Heart right ventricle (tissue), 16 donors: ENCODE measurements at regions of chr15 and their contacts with region 1.

Region 1: GRCh38 chr15:92808978-92809879 is 90.9 kb upstream of the CHD2 start:
- DNase-seq: peak; percentile 98 to 100
- ATAC-seq: peak; percentile 90 to 96 (median 92)
- H3K4me3 ChIP-seq: peak overlapping the region; percentile 36 to 73 (median 61)
- H3K27ac ChIP-seq: peak overlapping the region; percentile 96 to 99 (median 97)
- H3K4me1 ChIP-seq: peaks cover 0 to 66% (median 28%) of the 10 kb centered on the region in 9 donors
- H3K27me3 ChIP-seq: no peaks in the 10 kb centered on the region
- CTCF ChIP-seq: peak; percentile 93 to 100 (median 99)

Region 2: GRCh38 chr15:92820236-92821021 is 11.2 kb after region 1 on chr15:
- intact Hi-C with region 1: loop called in 2 of 10 experiments (anchors 1 kb)
- DNase-seq: peak; percentile 93
- ATAC-seq: peak; percentile 95 to 99 (median 98)
- H3K4me3 ChIP-seq: peak overlapping the region in 9 of 10 donors; percentile 25 to 57 (median 52)
- H3K27ac ChIP-seq: peak overlapping the region; percentile 43 to 91 (median 86)
- H3K4me1 ChIP-seq: peaks cover 0 to 32% (median 13%) of the 10 kb centered on the region in 9 donors
- H3K27me3 ChIP-seq: no peaks in the 10 kb centered on the region
- CTCF ChIP-seq: no peak

Region 3: DNA sequence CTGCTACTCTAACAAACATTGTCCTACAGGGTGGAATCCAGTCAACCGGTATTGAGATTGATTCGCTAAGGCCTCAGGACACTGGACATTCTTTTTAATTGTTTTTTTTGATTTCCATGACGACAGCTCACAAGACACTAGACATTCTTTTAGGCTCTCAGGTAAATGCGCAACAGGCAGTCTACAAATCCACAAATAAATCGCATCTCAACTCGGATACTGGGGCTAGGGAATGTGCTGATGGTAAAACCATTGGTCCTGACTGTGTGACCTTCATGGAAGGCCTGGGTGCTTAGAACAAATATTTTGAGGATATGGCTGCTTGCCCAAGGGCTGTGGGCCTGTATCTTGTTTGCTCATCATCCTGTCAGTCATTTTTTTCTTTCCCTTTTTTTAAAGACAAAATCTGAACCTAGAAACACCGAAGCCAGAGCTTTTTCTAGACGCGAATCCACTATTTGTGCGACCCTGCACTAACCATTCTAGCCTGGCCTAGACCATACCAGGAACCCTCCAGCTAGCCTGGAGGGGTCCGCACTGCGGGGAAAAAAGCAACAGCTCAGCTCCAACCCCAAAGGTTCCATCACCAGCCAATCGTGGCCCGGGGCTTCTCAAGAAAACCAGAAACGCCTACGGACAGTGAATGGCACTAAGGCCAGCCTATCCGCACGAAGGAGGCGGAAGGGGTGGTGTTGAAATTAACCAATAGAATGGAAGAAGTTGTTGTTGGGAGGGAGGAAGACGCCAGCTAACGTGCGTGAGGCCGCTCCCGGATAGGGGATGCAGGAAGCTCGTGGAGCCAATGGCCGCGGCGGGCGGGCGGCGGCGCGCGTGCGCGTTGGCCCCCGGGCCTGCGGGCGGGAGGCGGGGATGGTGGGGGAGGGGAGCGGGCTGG is 72.8 kb after region 1 on chr15:
- intact Hi-C with region 1: loop called in 8 of 10 experiments (anchors 1 to 10 kb)
- DNase-seq: peak; percentile 98 to 99
- ATAC-seq: peak; percentile 95 to 98 (median 96)
- H3K4me3 ChIP-seq: peak overlapping the region in 9 of 10 donors; percentile 30 to 95 (median 88)
- H3K27ac ChIP-seq: peak overlapping the region; percentile 53 to 100 (median 98)
- H3K4me1 ChIP-seq: peaks cover 8 to 54% (median 42%) of the 10 kb centered on the region in 9 donors
- H3K27me3 ChIP-seq: no peaks in the 10 kb centered on the region
- CTCF ChIP-seq: no peak

Region 4: DNA sequence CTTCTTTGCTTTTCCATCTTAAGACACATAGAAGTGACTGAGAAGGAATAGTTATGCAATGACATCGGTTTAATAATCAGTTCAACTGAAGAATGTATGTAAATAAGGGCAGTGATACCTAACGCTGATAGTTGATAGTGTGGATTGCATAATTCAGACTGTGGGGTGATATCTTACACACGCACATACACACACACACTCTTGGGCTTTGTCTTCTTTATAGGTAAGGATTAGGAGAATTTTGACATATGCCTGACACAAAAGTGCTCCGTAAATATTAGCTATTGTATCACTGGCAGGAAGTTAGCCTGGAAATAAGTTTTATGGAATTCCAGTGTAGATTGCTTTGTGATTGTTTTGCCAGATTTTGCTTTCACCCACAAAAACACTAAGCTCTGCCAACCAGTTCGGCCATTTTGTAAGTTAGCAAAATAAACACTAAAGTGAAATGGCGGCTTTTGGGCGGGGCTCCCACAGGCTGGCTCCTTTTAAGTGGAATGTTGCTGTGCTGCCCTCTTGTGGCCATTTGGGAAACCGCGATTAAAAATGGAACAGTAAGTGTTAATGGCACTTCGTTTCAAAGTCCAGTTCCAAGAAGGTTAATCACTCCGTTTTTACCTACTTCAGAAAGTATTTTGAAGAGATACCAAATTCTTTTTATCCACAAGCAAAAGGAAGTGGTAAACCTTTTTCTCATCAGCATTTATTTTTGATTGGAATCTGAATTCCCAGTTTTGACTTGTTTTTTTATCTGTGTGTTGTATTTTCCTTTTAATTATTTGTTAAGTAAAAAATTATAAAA is 108.6 kb after region 1 on chr15:
- intact Hi-C with region 1: loop called in 8 of 10 experiments (anchors 1 to 5 kb)
- DNase-seq: peak; percentile 86 to 97
- ATAC-seq: peak; percentile 55 to 85 (median 80)
- H3K4me3 ChIP-seq: peak overlapping the region in 6 of 10 donors; percentile 7 to 31 (median 22)
- H3K27ac ChIP-seq: peak overlapping the region; percentile 30 to 95 (median 80)
- H3K4me1 ChIP-seq: peaks cover 4 to 100% (median 94%) of the 10 kb centered on the region in 9 donors
- H3K27me3 ChIP-seq: no peaks in the 10 kb centered on the region
- CTCF ChIP-seq: peak; percentile 88 to 95 (median 90)

Region 5: GRCh38 chr15:93018580-93018979 is 209.4 kb after region 1 on chr15:
- intact Hi-C with region 1: loop called in 1 of 10 experiments (anchors 10 kb)
- DNase-seq: no peak
- ATAC-seq: no peak
- H3K4me3 ChIP-seq: no peak overlapping the region
- H3K27ac ChIP-seq: peak overlapping the region in 2 of 10 donors; percentile 2 to 11
- H3K4me1 ChIP-seq: peaks cover 0 to 33% (median 0%) of the 10 kb centered on the region in 9 donors
- H3K27me3 ChIP-seq: no peaks in the 10 kb centered on the region
- CTCF ChIP-seq: peak in 4 of 9 donors; percentile 13 to 36 (median 19)